ENCODE measurements at regions of chr11 and their contacts with region 1.

Region 1: DNA sequence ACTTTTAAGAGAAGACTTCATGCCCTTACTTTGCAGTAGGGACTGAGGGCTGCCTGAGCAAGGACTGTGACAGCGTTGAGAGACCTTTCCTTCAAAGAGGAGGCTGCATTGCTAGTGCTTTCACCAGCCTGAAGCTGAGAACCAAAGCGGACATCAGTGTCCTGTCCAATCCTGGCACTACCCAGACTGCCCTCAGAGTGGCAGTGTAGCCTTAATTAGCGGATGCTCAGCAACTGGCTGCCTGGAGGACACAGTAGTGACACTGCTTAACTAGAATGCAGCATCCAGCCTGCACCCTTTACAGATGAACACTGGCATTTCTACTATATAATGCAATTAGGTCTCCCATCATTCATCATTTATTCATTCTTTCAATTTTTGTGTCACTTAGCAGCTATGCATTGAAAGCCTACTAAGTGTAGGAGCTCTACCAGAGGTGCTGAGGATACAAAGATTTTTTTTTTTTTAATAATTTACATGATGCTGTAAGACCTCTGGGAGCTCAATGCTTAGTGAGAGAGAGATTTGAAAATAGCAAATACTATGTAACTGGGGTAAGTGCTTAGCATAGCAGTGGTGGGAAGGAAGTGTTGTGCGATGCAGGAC is 36.9 kb upstream of the SLC36A4 start:
- DNase-seq: peak; percentile 67 to 92 (median 84)
- H3K4me3 ChIP-seq: no peak overlapping the region
- H3K27ac ChIP-seq: peak overlapping the region in 2 of 59 donors; percentile 6 to 57
- H3K27me3 ChIP-seq: peaks cover 0 to 28% (median 0%) of the 10 kb centered on the region in 45 donors
- CTCF ChIP-seq: peak; percentile 54 to 99 (median 92)

Region 2: DNA sequence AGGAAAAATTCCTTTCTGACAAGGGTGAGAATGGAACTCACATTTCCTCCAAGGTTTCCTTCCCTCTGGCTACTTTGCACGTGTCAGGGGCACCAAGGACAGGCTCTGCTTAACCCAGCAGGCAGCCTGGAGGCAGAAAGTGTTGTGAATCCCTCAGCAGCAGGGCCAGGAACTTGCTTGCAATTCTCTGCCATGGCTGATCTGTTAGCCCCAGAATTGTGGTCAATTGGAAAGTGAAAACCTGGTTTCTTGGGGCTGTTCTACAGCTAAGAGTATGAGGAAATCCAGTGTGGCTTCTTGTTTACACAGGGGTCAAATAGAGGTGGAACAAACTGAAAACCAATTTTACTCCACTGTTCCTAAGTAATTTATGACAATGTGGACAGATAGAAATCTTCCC is 388.5 kb after region 1 on chr11:
- intact Hi-C with region 1: no loop called
- DNase-seq: no peak
- H3K4me3 ChIP-seq: no peak overlapping the region
- H3K27ac ChIP-seq: no peak overlapping the region
- H3K27me3 ChIP-seq: peaks cover 0 to 8% (median 0%) of the 10 kb centered on the region in 45 donors
- CTCF ChIP-seq: no peak

Region 3: DNA sequence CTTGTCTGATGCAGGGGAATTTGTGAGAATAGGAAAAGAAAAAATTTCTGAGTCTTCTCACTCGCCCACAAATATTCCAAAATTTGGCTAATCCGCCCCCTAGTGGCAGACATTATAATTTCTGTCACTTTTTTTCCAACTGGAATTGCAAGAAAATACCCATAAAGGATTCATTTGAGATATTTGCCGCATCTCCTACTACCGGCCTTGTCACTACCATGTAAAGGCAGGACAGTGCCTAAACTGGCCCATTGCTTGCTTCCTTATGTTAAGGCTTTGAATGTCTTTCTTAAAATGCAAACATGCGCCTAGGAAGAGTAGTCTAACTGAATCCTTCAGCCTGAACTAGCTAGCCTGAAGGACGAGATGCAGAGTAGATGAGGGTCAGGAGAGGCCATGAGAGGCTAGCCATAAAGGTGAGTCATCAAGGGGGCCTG is 417.5 kb after region 1 on chr11:
- intact Hi-C with region 1: loop called (anchors 2 to 5 kb)
- DNase-seq: peak in 1 of 10 donors; percentile 36
- H3K4me3 ChIP-seq: no peak overlapping the region
- H3K27ac ChIP-seq: no peak overlapping the region
- H3K27me3 ChIP-seq: peaks cover 0 to 5% (median 0%) of the 10 kb centered on the region in 45 donors
- CTCF ChIP-seq: peak; percentile 70 to 99 (median 82)